Left colon (tissue), 2 donors: ENCODE measurements at regions of chr15 and their contacts with region 1.

Region 1: DNA sequence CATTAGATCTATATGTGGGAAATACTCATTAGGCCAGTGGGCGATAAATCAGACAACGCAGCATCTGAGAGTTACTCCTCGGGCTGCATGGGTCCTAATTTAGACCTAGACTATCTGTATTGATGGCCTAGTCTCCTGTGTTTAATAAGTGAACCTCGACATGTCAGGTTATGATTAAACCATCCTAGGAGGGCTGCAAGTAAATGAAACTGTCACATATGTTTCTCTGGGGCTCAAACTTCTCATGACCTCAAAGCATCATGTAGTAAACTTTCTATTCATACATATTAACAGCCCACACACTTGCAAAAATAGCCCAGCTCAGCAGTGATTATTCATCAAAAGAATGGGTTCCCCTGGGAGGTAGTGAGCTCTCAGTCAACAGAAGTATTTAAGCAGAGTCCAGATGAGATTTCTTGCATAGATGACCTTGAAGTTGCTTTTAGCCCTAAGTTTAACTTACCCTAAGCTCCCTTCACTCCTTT is 51.6 kb downstream of the RAB11A start:
- DNase-seq: no peak
- ATAC-seq: no peak

Region 2: GRCh38 chr15:66269326-66270038 is 348.6 kb after region 1 on chr15:
- intact Hi-C with region 1: loop called in 1 of 2 experiments (anchors 10 kb)
- DNase-seq: peak in 1 of 2 donors; percentile 39
- ATAC-seq: peak; percentile 99

Region 3: DNA sequence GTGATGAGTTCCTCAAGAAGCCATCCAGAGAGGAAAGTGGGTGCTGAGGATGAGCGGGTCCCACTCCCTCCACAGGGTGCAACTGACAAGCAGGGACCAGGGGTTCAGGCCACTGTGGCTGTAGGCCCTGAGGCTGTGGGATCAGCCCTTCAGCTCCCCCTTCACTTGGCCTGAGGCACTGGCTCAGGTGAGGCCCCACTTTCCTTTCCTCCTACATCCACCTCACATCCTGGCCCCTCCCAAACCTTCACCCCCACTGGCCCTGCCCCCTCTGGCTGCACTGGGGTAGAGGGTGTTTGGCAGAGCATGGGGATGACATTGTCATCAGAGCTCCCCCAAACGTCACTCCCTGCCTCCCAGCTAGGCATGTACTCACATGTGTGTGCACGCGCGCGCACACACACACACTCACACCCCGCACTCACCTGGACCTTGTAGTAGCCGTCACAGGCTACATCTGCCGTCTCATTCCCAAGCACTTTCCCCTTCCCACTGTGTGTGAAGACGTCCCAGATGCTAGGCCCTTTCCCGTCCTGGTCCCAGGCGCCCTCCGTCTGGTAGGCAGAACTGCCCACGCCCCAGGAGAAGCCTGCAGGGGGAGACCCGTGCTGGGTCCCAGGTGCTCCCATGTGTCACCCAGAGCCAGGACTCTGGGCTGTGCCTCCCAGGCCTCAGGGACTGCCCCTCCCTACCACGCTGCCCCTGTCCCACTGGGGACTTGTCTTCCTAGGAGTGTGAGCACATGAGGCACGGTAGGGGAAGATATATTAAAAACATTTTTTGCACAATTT is 643.6 kb after region 1 on chr15:
- intact Hi-C with region 1: no loop called
- DNase-seq: no peak
- ATAC-seq: no peak